ENCODE measurements at regions of chr20 and their contacts with region 1.

Region 1: DNA sequence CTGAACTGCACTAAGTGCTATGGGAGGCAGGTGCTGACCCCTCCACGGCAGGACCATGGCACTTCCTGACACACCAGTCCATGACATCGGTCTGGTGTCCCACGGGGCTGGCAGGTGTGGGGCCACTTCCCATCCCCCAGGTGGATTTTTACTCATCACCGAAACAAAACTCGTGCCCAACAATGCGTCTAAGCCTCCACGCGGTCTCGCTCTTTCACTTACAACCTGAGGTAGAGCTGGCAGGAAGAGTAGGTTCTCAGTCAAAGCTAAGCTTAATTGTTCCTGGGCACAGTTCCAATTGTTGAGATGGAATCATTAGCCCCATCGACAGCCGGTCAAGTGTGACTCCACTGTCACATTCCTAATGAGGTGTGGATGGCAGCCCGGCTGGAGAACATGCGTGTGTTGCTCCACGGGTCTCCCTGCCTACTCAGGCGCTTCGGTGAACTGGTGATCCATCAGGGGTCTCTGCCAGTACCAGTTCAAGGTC is 125.7 kb downstream of the SLC23A2 start:
- DNase-seq: no peak
- ATAC-seq: peak; percentile 75
- H3K4me3 Mint-ChIP-seq: peak overlapping the region; percentile 44
- H3K27ac Mint-ChIP-seq: peak overlapping the region; percentile 60
- H3K4me1 Mint-ChIP-seq: peaks cover 12% of the 10 kb centered on the region
- H3K27me3 Mint-ChIP-seq: no peaks in the 10 kb centered on the region
- CTCF ChIP-seq: no peak

Region 2: DNA sequence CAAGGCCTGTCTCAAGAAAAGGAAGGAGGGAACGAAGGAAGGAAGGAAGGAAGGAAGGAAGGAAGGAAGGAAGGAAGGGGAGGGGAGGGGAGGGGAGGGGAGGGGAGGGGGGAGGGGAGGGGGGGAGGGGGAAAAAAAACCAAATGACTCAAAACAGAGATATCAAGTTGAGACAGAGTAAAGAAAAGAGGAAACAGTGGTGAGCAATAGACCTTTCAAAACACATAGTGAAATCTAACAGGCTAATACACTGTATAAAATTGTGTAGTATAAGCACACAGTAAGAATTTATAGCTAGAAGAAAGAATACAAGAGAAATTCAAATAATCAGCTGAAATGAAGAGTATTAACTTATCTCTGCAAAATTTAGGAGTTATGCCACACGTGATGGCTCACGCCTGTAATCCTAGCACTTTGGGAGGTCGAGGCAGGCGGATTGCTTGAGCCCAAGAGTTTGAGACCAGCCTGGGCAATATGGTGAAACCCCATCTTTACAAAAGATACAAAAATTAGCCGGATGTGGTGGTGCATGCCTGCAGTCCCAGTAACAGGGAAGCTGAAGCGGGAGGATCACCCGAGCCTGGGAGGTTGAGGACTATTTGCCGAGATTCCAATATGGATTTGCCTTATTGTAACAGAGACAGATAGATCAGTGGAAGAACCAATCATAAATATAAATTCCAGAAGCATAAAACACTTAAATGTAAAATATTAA is 30.7 kb before region 1 on chr20:
- CTCF ChIA-PET with region 1: no interaction called
- POLR2A ChIA-PET with region 1: interaction called, 11 read pairs
- intact Hi-C with region 1: no loop called
- DNase-seq: no peak
- ATAC-seq: peak; percentile 86
- H3K4me3 Mint-ChIP-seq: peak overlapping the region; percentile 50
- H3K27ac Mint-ChIP-seq: peak overlapping the region; percentile 79
- H3K4me1 Mint-ChIP-seq: peaks cover 40% of the 10 kb centered on the region
- H3K27me3 Mint-ChIP-seq: no peaks in the 10 kb centered on the region
- CTCF ChIP-seq: no peak

Region 3: DNA sequence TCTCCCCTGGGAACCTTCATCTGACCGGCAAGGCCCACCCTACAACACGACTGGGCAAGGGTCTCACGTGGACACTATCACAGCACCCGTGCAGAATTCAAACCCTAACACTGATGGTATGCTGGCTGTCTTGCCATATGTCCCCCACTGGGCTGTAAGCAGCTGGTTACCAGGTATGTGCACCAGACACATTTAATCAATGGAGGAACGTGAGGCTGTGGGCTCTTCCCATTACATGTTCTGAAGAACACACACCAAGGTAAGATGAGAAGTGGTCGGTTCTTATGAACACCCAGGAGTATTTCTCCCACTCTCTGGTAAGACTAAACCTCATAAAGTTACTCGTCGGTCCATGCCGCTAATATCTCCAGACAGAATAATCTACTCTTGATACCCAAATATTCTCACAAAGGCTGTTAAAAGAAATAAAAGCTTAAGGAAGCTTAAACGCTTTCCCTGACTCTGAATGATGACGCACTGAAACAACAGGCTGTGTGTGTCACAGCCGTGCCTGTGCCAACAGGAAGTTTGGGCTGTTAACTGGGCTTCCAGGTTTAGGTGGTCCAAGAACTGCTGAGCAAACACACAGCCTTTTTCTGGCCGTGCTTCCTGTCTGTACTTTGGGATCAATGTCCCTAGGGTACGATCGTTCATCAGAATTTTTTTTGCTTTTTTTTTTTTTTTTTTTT is 50.4 kb after region 1 on chr20:
- CTCF ChIA-PET with region 1: no interaction called
- POLR2A ChIA-PET with region 1: no interaction called
- intact Hi-C with region 1: no loop called
- DNase-seq: no peak
- ATAC-seq: no peak
- H3K4me3 Mint-ChIP-seq: no peak overlapping the region
- H3K27ac Mint-ChIP-seq: peak overlapping the region; percentile 21
- H3K4me1 Mint-ChIP-seq: peaks cover 15% of the 10 kb centered on the region
- H3K27me3 Mint-ChIP-seq: no peaks in the 10 kb centered on the region
- CTCF ChIP-seq: no peak

Region 4: DNA sequence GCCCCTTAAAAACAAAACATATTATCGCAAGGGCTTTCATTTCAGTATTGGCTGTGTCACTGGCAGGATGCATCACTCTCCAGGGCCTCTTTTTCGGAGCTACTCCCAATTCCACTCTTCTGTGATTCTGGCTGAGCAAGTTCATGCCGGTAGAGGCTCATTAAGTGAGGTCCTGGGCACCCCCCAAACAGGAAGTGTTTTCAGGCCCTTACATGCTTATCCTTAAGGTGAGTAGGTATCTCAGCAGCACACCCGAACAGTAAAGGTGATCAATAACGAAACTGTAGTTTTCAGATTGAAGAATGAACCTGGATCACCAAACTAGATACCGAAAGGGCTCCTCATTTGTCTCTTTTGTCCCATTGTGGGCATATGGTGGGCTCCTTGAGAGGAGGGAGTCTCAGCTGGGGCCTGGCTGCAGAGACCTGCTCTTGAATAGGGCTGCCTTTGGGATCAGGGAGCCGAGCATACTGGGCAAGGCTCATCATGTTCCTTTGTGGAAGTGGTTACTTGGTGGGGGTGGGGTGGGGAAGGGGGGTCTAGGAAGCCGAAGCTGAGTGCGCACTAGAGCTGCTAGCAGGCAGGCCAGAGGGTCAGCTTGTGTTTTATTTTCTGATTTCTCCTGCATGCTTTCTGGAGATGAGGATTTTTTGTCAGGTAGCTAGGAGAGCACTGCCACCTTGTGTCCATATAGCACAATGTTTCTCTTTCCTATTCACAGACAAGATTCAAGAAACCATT is 316.4 kb after region 1 on chr20:
- CTCF ChIA-PET with region 1: no interaction called
- POLR2A ChIA-PET with region 1: no interaction called
- intact Hi-C with region 1: no loop called
- DNase-seq: no peak
- ATAC-seq: peak; percentile 78
- H3K4me3 Mint-ChIP-seq: no peak overlapping the region
- H3K27ac Mint-ChIP-seq: peak overlapping the region; percentile 77
- H3K4me1 Mint-ChIP-seq: peaks cover 8% of the 10 kb centered on the region
- H3K27me3 Mint-ChIP-seq: no peaks in the 10 kb centered on the region
- CTCF ChIP-seq: no peak